K562 (cell line): ENCODE measurements at regions of chr2 and their contacts with region 1.

Region 1: DNA sequence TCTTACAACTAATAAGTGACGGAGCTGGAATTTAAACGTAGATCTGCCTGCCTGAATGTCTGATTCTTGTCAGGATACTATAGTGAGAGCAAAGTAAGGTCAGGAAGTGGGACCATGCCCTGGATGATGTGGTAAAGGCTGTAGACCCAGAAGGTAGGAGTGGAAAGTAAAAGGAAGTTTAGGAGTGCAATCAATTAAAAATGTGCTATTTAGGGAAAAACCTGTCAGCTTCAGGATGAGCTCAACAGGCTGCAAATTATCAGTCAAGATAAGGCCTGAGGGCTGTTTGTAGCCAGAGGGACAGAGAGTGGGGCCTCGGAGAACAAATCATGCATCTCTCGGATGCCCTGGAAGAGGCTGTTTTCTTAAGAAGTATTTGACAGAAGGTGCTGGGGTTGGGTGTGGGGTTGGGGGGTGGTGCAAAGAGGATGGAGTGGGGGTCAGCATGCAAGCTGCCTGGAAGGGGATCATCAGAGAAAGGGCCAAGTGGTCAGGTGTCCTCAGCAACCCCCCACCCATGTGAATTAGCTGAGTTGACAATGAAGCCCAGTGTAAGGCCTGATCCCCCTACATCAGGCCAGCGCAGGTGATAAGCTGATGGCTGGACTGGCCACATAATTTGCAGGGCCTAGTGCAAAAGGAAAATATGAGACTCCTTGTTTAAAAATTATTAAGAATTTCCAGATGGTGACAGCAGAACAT is 53.2 kb upstream of the MAPRE3 start:
- DNase-seq: no peak
- ATAC-seq: no peak
- H3K4me3 ChIP-seq: no peak overlapping the region
- H3K27ac ChIP-seq: no peak overlapping the region
- H3K4me1 ChIP-seq: no peaks in the 10 kb centered on the region
- H3K27me3 ChIP-seq: peaks cover 33 to 59% of the 10 kb centered on the region in 2 experiments
- CTCF ChIP-seq: no peak
- EP300 ChIP-seq: no peak
- POLR2A ChIP-seq: no peak
- RAD21 ChIP-seq: no peak

Region 2: DNA sequence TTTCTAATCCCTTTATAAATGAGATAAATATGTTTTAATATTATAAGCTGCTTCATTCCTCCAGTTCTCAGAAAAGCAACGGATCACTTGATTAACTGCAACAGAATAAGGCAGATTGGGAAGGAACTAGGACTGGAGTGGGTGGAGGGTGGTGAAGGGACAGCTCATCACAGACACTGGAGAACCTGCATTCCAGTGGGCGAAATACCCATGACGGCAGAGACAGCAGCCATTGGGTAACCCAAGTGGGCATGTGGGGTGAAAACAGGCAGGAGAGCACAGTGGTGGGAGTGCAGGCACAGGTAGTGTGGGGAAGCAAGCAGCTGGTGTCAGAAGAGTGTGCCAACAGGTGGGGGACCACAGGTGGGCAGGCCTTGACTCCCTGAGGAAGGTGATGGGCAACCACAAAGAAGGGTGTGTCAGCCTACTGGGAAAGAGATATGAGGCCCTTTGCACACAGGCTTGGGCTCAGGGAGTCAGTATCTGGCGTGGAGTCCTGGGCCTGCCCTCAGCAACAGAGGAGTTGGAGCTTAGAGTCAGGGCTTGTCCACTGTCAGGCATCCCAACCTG is 42.1 kb before region 1 on chr2:
- CTCF ChIA-PET with region 1: no interaction called
- POLR2A ChIA-PET with region 1: no interaction called
- in situ Hi-C with region 1: no loop called
- intact Hi-C with region 1: loop called (anchors 5 kb)
- DNase-seq: no peak
- ATAC-seq: no peak
- H3K4me3 ChIP-seq: no peak overlapping the region
- H3K27ac ChIP-seq: no peak overlapping the region
- H3K4me1 ChIP-seq: no peaks in the 10 kb centered on the region
- H3K27me3 ChIP-seq: peaks cover 6 to 38% of the 10 kb centered on the region in 2 experiments
- CTCF ChIP-seq: no peak
- EP300 ChIP-seq: no peak
- POLR2A ChIP-seq: no peak
- RAD21 ChIP-seq: no peak